Prostate gland (tissue), 2 donors: ENCODE measurements at regions of chr21 and their contacts with region 1.

Region 1: GRCh38 chr21:43810505-43811261 is 21.3 kb downstream of the RRP1 start:
- DNase-seq: peak; percentile 74
- H3K4me3 ChIP-seq: no peak overlapping the region
- H3K27ac ChIP-seq: peak overlapping the region in 1 of 2 donors; percentile 31
- H3K4me1 ChIP-seq: peaks cover 7% of the 10 kb centered on the region
- H3K27me3 ChIP-seq: no peaks in the 10 kb centered on the region
- CTCF ChIP-seq: peak; percentile 91 to 98 (median 96)
- POLR2A ChIP-seq: no peak

Region 2: GRCh38 chr21:42721341-42721824 is 1089.3 kb before region 1 on chr21:
- intact Hi-C with region 1: no loop called
- DNase-seq: peak; percentile 49
- H3K4me3 ChIP-seq: no peak overlapping the region
- H3K27ac ChIP-seq: peak overlapping the region; percentile 47 to 66
- H3K4me1 ChIP-seq: peaks cover 8% of the 10 kb centered on the region
- H3K27me3 ChIP-seq: no peaks in the 10 kb centered on the region
- CTCF ChIP-seq: peak in 1 of 4 experiments; percentile 21
- POLR2A ChIP-seq: no peak

Region 3: DNA sequence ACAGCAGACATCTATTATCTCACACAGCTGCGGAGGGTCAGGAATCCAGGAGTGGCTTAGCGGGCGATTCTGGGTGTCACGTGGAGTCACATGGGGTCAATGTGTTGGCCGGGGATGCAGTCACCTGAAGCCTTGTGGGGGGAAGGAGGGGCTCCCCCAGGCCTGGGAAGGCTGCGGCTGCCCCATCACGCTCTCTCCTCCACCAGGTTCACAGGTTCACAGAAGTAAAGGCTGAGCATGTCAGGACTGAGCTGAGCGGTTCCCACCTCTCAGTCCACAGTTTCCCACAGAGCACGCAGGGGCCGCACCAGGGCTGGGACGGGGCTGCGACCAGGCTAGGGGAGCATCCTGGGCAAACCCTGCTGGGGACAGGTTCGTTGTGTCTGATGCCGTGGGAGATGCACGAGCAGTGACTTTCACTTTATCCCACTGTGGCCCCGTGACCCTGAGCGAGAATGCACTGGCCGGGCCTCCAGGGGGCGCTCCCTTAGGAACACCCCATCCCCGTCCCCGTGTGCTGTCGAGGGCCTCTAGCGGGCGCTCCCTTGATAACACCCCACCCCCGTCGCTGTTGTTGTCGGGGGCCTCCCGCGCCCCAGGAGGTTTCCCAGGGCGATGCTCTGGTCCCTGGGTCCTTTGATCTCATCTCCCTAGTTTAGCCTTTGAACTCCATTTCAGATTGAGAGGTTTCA is 128.2 kb after region 1 on chr21:
- intact Hi-C with region 1: loop called (anchors 10 kb)
- DNase-seq: peak; percentile 51
- H3K4me3 ChIP-seq: no peak overlapping the region
- H3K27ac ChIP-seq: no peak overlapping the region
- H3K4me1 ChIP-seq: peaks cover 17% of the 10 kb centered on the region
- H3K27me3 ChIP-seq: no peaks in the 10 kb centered on the region
- CTCF ChIP-seq: peak; percentile 35 to 87 (median 82)
- POLR2A ChIP-seq: no peak

Region 4: GRCh38 chr21:43975495-43975993 is 164.9 kb after region 1 on chr21:
- intact Hi-C with region 1: loop called (anchors 1 kb)
- DNase-seq: peak; percentile 78
- H3K4me3 ChIP-seq: no peak overlapping the region
- H3K27ac ChIP-seq: peak overlapping the region in 1 of 2 donors; percentile 27
- H3K4me1 ChIP-seq: no peaks in the 10 kb centered on the region
- H3K27me3 ChIP-seq: no peaks in the 10 kb centered on the region
- CTCF ChIP-seq: peak; percentile 77 to 93 (median 88)
- POLR2A ChIP-seq: no peak